ENCODE measurements at regions of chr18 and their contacts with region 1.

Region 1: GRCh38 chr18:53567929-53568574 is 656.4 kb downstream of the MBD2 start:
- ATAC-seq: peak in 3 of 8 experiments; percentile 45 to 70 (median 69)
- H3K4me3 ChIP-seq: no peak overlapping the region
- H3K27ac ChIP-seq: no peak overlapping the region
- H3K4me1 ChIP-seq: peaks cover 0 to 7% of the 10 kb centered on the region in 2 donors

Region 2: GRCh38 chr18:53417003-53417402 is 151.0 kb before region 1 on chr18:
- in situ Hi-C with region 1: no loop called
- ATAC-seq: peak in 1 of 8 experiments; percentile 67
- H3K4me3 ChIP-seq: no peak overlapping the region
- H3K27ac ChIP-seq: no peak overlapping the region
- H3K4me1 ChIP-seq: peaks cover 3% of the 10 kb centered on the region in 2 donors

Region 3: GRCh38 chr18:54119524-54120019 is 551.5 kb after region 1 on chr18:
- in situ Hi-C with region 1: loop called in 4 of 9 experiments (anchors 25 kb)
- ATAC-seq: peak; percentile 56 to 94 (median 75)
- H3K4me3 ChIP-seq: no peak overlapping the region
- H3K27ac ChIP-seq: no peak overlapping the region
- H3K4me1 ChIP-seq: peaks cover 0 to 25% of the 10 kb centered on the region in 2 donors

Region 4: DNA sequence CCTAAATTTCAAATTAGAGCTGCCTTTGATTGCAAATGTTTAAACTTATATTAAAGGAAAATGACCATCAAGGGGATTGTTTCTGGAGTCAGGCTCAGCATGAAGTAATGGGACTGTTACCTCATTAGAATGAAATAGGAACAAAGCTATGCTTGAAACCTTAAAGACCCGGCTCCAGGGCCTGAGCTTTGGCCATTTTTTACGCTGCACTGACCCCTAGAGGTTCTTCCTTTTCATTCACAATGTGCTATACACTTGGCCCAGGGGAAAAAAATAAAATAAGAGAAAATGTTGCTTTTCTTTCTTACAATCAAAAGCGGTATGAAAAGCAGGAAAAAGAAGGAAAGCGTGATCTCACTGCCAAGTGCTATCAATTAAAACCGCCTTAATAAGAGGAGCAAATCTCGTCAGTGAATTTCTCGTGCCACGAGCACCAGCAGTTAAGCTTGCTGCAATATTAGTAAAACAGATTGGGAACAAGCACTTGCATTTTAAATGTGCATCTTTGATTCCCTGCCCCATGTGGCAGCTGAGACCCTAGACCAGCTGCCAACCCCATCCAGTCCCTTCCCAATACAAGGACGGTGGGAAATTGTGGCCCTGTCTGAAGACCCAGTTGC is 559.8 kb after region 1 on chr18:
- in situ Hi-C with region 1: loop called in 5 of 9 experiments (anchors 25 kb)
- ATAC-seq: peak; percentile 79 to 97 (median 90)
- H3K4me3 ChIP-seq: no peak overlapping the region
- H3K27ac ChIP-seq: no peak overlapping the region
- H3K4me1 ChIP-seq: peaks cover 3 to 9% of the 10 kb centered on the region in 2 donors

Measured in motor neuron (in vitro differentiated cells).